ENCODE measurements at regions of chr15 and their contacts with region 1.

Region 1: DNA sequence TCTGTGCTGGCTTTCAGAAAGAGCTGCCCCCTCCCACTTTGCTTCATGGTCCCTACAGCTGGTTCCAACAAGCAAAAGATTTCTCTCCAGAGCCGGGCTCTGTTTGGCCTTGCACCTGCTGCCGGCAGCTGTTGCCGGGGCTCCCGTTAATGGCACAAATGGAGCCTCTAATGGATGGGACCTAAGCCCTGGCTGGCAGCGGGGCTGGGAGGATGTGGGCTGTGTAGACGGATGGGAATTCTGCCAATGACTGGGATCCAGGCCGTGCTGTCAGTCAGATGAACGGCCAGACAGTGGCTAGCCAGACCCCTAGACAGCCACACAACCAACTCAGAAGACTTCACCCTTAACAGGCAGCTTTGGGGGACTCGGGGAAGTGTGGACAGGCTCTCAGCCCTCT is 88.0 kb downstream of the RPLP1 start:
- DNase-seq: peak; percentile 62
- H3K4me3 ChIP-seq: no peak overlapping the region
- H3K27ac ChIP-seq: peak overlapping the region in 1 of 2 experiments; percentile 84; a peak in 2 of 4 replicates
- H3K4me1 ChIP-seq: peaks cover under 1 to 35% of the 10 kb centered on the region in 2 experiments; a peak in 2 of 4 replicates
- H3K27me3 ChIP-seq: peaks cover 8% of the 10 kb centered on the region; the same call in 1 of the 2 replicates
- CTCF ChIP-seq: no peak
- EP300 ChIP-seq: peak in 1 of 2 experiments; percentile 23; a peak in 1 of 4 replicates
- RAD21 ChIP-seq: no peak; the same call in 1 of the 2 replicates

Region 2: GRCh38 chr15:69529961-69530633 is 10.5 kb before region 1 on chr15:
- CTCF ChIA-PET with region 1: interaction called, 12 read pairs
- POLR2A ChIA-PET with region 1: interaction called, 3 read pairs
- DNase-seq: no peak
- H3K4me3 ChIP-seq: no peak overlapping the region
- H3K27ac ChIP-seq: no peak overlapping the region
- H3K4me1 ChIP-seq: peaks cover 8 to 23% of the 10 kb centered on the region in 2 experiments; a peak in 3 of 4 replicates
- H3K27me3 ChIP-seq: no peaks in the 10 kb centered on the region; the same call in 1 of the 2 replicates
- CTCF ChIP-seq: no peak
- EP300 ChIP-seq: no peak
- RAD21 ChIP-seq: no peak

Region 3: GRCh38 chr15:69784798-69785566 is 244.4 kb after region 1 on chr15:
- CTCF ChIA-PET with region 1: no interaction called
- POLR2A ChIA-PET with region 1: no interaction called
- DNase-seq: no peak
- H3K4me3 ChIP-seq: no peak overlapping the region
- H3K27ac ChIP-seq: no peak overlapping the region
- H3K4me1 ChIP-seq: peaks cover 0 to 2% of the 10 kb centered on the region in 2 experiments; a peak in 1 of 4 replicates
- H3K27me3 ChIP-seq: no peaks in the 10 kb centered on the region
- CTCF ChIP-seq: no peak
- EP300 ChIP-seq: no peak
- RAD21 ChIP-seq: no peak

Measured in SK-N-SH (cell line).